SK-N-SH (cell line): ENCODE measurements at regions of chr9 and their contacts with region 1.

Region 1: GRCh38 chr9:105414947-105415661 is 32.7 kb upstream of the FSD1L start:
- DNase-seq: peak; percentile 72
- H3K4me3 ChIP-seq: peak overlapping the region in 1 of 2 experiments; percentile 45; a peak in 1 of 4 replicates
- H3K27ac ChIP-seq: no peak overlapping the region
- H3K4me1 ChIP-seq: peaks cover 0 to 2% of the 10 kb centered on the region in 2 experiments; a peak in 1 of 4 replicates
- H3K27me3 ChIP-seq: no peaks in the 10 kb centered on the region
- CTCF ChIP-seq: peak; percentile 95
- EP300 ChIP-seq: no peak
- RAD21 ChIP-seq: peak; percentile 98

Region 2: GRCh38 chr9:104780799-104781395 is 634.2 kb before region 1 on chr9:
- CTCF ChIA-PET with region 1: interaction called, 13 read pairs
- POLR2A ChIA-PET with region 1: no interaction called
- DNase-seq: no peak
- H3K4me3 ChIP-seq: no peak overlapping the region
- H3K27ac ChIP-seq: no peak overlapping the region
- H3K4me1 ChIP-seq: no peaks in the 10 kb centered on the region; a peak in 1 of 4 replicates
- H3K27me3 ChIP-seq: no peaks in the 10 kb centered on the region
- CTCF ChIP-seq: peak; percentile 77
- EP300 ChIP-seq: no peak
- RAD21 ChIP-seq: peak; percentile 87

Region 3: GRCh38 chr9:104802110-104802509 is 613.0 kb before region 1 on chr9:
- CTCF ChIA-PET with region 1: interaction called, 24 read pairs
- POLR2A ChIA-PET with region 1: no interaction called
- DNase-seq: no peak
- H3K4me3 ChIP-seq: no peak overlapping the region
- H3K27ac ChIP-seq: no peak overlapping the region; a peak in 1 of 4 replicates
- H3K4me1 ChIP-seq: peaks cover 0 to 40% of the 10 kb centered on the region in 2 experiments; a peak in 2 of 4 replicates
- H3K27me3 ChIP-seq: no peaks in the 10 kb centered on the region
- CTCF ChIP-seq: no peak
- EP300 ChIP-seq: no peak
- RAD21 ChIP-seq: no peak

Region 4: GRCh38 chr9:105157130-105157583 is 257.9 kb before region 1 on chr9:
- CTCF ChIA-PET with region 1: interaction called, 27 read pairs
- POLR2A ChIA-PET with region 1: no interaction called
- DNase-seq: peak; percentile 76
- H3K4me3 ChIP-seq: no peak overlapping the region
- H3K27ac ChIP-seq: peak overlapping the region in 1 of 2 experiments; percentile 24; a peak in 2 of 4 replicates
- H3K4me1 ChIP-seq: peaks cover 0 to 2% of the 10 kb centered on the region in 2 experiments; a peak in 1 of 4 replicates
- H3K27me3 ChIP-seq: no peaks in the 10 kb centered on the region
- CTCF ChIP-seq: peak; percentile 66
- EP300 ChIP-seq: no peak
- RAD21 ChIP-seq: peak; percentile 80

Region 5: GRCh38 chr9:105244003-105244733 is 170.9 kb before region 1 on chr9 and contains the start of gene SLC44A1:
- CTCF ChIA-PET with region 1: interaction called, 16 read pairs
- POLR2A ChIA-PET with region 1: no interaction called
- DNase-seq: peak; percentile 94
- H3K4me3 ChIP-seq: peak within 1 kb of the TSS; percentile 88 to 90
- H3K27ac ChIP-seq: peak within 1 kb of the TSS; percentile 66 to 79
- H3K4me1 ChIP-seq: peaks cover 3 to 11% of the 10 kb centered on the region in 2 experiments; a peak in 3 of 4 replicates
- H3K27me3 ChIP-seq: no peaks in the 10 kb centered on the region
- CTCF ChIP-seq: no peak
- EP300 ChIP-seq: peak; percentile 19 to 64; a peak in 2 of 4 replicates
- RAD21 ChIP-seq: no peak; the same call in 1 of the 2 replicates
- polyA plus RNA-seq, gene SLC44A1: 4.5 and 5.9 TPM in 2 replicates

Region 6: GRCh38 chr9:105330755-105331154 is 84.3 kb before region 1 on chr9:
- CTCF ChIA-PET with region 1: no interaction called
- POLR2A ChIA-PET with region 1: no interaction called
- DNase-seq: no peak
- H3K4me3 ChIP-seq: no peak overlapping the region
- H3K27ac ChIP-seq: no peak overlapping the region; a peak in 1 of 4 replicates
- H3K4me1 ChIP-seq: peaks cover 0 to 14% of the 10 kb centered on the region in 2 experiments; a peak in 2 of 4 replicates
- H3K27me3 ChIP-seq: no peaks in the 10 kb centered on the region
- CTCF ChIP-seq: no peak
- EP300 ChIP-seq: no peak
- RAD21 ChIP-seq: no peak

Region 7: DNA sequence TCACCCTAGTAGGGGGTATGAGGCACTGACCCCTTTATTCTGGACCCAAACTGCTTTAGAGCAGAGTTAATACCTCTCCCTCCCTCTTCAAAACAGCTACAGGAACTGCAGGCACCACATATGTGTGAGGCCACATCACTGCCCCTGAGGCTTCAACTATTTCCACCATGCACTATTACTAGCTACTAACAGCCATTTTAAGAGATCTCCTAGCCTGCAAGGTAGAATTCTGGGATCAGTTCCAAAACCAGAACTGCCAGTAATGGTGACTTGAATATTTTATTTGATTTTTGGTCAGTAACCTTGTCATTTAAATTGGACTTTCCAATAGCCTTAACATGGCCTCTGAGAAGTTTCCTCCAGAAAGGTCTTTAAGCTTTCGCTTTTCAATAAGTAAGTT is 22.6 kb before region 1 on chr9:
- CTCF ChIA-PET with region 1: interaction called, 21 read pairs
- POLR2A ChIA-PET with region 1: no interaction called
- DNase-seq: peak; percentile 21
- H3K4me3 ChIP-seq: no peak overlapping the region
- H3K27ac ChIP-seq: peak overlapping the region in 1 of 2 experiments; percentile 5; a peak in 1 of 4 replicates
- H3K4me1 ChIP-seq: peaks cover 0 to 6% of the 10 kb centered on the region in 2 experiments; a peak in 2 of 4 replicates
- H3K27me3 ChIP-seq: no peaks in the 10 kb centered on the region
- CTCF ChIP-seq: no peak
- EP300 ChIP-seq: no peak
- RAD21 ChIP-seq: no peak